GM12878 (cell line): ENCODE measurements at regions of chr4 and their contacts with region 1.

Region 1: GRCh38 chr4:131547506-131547981 is 1601.5 kb upstream of the PCDH10 start:
- DNase-seq: peak; percentile 43
- ATAC-seq: peak; percentile 88
- H3K4me3 ChIP-seq: no peak overlapping the region
- H3K27ac ChIP-seq: peak overlapping the region; percentile 64
- H3K4me1 ChIP-seq: peaks cover 7% of the 10 kb centered on the region
- H3K27me3 ChIP-seq: no peaks in the 10 kb centered on the region
- CTCF ChIP-seq: no peak
- EP300 ChIP-seq: no peak
- POLR2A ChIP-seq: no peak
- RAD21 ChIP-seq: no peak

Region 2: DNA sequence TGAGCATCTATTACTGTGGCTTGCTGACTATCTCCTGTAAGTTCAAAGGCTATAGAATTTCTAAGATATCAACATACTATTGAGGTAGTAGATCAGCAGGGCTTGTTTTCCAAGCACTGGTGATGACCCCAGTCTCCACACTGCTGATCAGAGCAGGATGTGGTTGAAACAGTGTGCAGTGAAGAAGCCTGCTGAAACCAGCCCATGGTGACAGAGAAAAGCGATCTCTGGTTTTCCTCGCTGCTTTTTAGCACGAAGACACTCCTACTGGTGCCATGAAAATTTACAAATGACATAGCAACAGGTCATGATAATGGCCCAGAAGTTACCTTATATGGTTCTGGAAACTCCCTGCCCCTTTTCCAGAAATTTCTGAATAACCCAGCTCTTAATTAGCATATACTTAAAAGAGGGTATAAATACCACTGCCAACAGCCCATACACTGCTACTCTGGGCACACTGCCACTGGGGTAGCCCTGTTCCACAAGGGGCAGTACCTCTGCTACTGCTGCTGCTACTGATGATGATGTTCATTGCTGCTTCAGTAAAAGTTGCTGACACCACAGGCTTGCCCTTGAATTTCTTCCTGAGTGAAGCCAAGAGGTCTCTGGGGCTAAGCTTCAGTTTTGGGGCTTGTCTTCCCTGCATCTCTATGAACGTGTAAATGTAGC is 88.0 kb before region 1 on chr4:
- CTCF ChIA-PET with region 1: no interaction called
- POLR2A ChIA-PET with region 1: no interaction called
- RAD21 ChIA-PET with region 1: no interaction called
- SMC1A ChIA-PET with region 1: interaction called, 4 read pairs
- in situ Hi-C with region 1: no loop called
- intact Hi-C with region 1: loop called (anchors 5 kb)
- DNase-seq: peak; percentile 43
- ATAC-seq: peak; percentile 96
- H3K4me3 ChIP-seq: no peak overlapping the region
- H3K27ac ChIP-seq: no peak overlapping the region; the same call in 1 of the 2 replicates
- H3K4me1 ChIP-seq: peaks cover 7% of the 10 kb centered on the region
- H3K27me3 ChIP-seq: no peaks in the 10 kb centered on the region
- CTCF ChIP-seq: 0 out of 6 replicates have a peak, but pooled peaks of 2 of the 3 experiments have one; percentile 7 to 19
- EP300 ChIP-seq: peak in 1 of 2 experiments; percentile 22; a peak in 1 of 4 replicates
- POLR2A ChIP-seq: no peak
- RAD21 ChIP-seq: no peak

Region 3: GRCh38 chr4:131509521-131509920 is 38.0 kb before region 1 on chr4:
- CTCF ChIA-PET with region 1: no interaction called
- POLR2A ChIA-PET with region 1: no interaction called
- RAD21 ChIA-PET with region 1: no interaction called
- SMC1A ChIA-PET with region 1: no interaction called
- in situ Hi-C with region 1: no loop called
- intact Hi-C with region 1: no loop called
- DNase-seq: no peak
- ATAC-seq: no peak
- H3K4me3 ChIP-seq: no peak overlapping the region
- H3K27ac ChIP-seq: no peak overlapping the region
- H3K4me1 ChIP-seq: no peaks in the 10 kb centered on the region
- H3K27me3 ChIP-seq: no peaks in the 10 kb centered on the region
- CTCF ChIP-seq: no peak
- EP300 ChIP-seq: no peak
- POLR2A ChIP-seq: no peak
- RAD21 ChIP-seq: no peak

Region 4: GRCh38 chr4:131721883-131722282 is 174.3 kb after region 1 on chr4:
- CTCF ChIA-PET with region 1: no interaction called
- POLR2A ChIA-PET with region 1: no interaction called
- RAD21 ChIA-PET with region 1: no interaction called
- SMC1A ChIA-PET with region 1: no interaction called
- in situ Hi-C with region 1: no loop called
- intact Hi-C with region 1: no loop called
- DNase-seq: no peak
- ATAC-seq: no peak
- H3K4me3 ChIP-seq: no peak overlapping the region
- H3K27ac ChIP-seq: no peak overlapping the region
- H3K4me1 ChIP-seq: no peaks in the 10 kb centered on the region
- H3K27me3 ChIP-seq: no peaks in the 10 kb centered on the region
- CTCF ChIP-seq: no peak
- EP300 ChIP-seq: no peak
- POLR2A ChIP-seq: no peak
- RAD21 ChIP-seq: no peak